Naive thymus-derived CD4-positive, alpha-beta T cell (primary cell): ENCODE measurements at regions of chr6 and their contacts with region 1.

Region 1: DNA sequence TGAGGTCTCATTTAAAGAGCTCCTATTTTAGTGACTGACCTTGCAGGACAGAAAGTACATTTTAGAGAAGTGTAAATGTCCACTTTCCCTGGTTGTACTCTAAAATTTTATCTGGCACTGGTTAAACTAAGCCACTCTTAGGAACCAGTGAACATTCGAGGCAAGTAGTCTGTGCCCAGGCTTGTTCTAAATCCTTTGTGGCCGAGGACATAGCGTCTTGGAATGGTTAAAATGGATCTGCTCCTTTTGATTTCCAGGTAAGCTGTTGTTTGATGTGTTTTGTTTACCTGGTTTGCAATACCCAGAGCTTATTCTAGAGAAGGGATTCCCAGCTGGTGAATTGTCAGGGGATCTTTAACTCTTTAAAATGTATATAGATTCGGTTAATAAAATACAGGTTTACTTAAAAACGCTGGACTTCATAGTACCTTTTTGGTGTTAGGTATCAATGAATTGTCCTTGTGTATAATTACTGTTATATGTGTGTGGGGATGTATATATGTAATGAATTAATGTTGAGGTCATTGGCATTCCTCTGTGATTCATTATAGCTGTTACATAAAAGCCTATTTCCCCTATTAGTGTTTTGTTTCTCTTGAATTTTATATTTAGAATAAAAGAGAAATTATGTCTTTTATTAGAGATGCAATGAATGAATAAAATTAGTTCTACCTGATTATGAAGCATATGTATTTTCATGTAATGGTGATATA is 15.8 kb downstream of the SNX9 start:
- DNase-seq: no peak
- ATAC-seq: no peak
- H3K4me3 ChIP-seq: no peak overlapping the region
- H3K4me3 Mint-ChIP-seq: peak overlapping the region in 1 of 10 donors; percentile 12
- H3K27ac ChIP-seq: no peak overlapping the region
- H3K27ac Mint-ChIP-seq: no peak overlapping the region
- H3K4me1 ChIP-seq: peaks cover 0 to 21% of the 10 kb centered on the region in 2 donors
- H3K4me1 Mint-ChIP-seq: peaks cover 21 to 96% (median 87%) of the 10 kb centered on the region in 7 donors
- H3K27me3 ChIP-seq: no peaks in the 10 kb centered on the region
- H3K27me3 Mint-ChIP-seq: peaks cover 0 to 3% (median 0%) of the 10 kb centered on the region in 5 donors

Region 2: GRCh38 chr6:157610451-157610999 is 228.3 kb before region 1 on chr6:
- CTCF ChIA-PET with region 1: no interaction called
- POLR2A ChIA-PET with region 1: no interaction called
- intact Hi-C with region 1: no loop called
- DNase-seq: no peak
- ATAC-seq: no peak
- H3K4me3 ChIP-seq: no peak overlapping the region
- H3K4me3 Mint-ChIP-seq: no peak overlapping the region
- H3K27ac ChIP-seq: no peak overlapping the region
- H3K27ac Mint-ChIP-seq: no peak overlapping the region
- H3K4me1 ChIP-seq: no peaks in the 10 kb centered on the region
- H3K4me1 Mint-ChIP-seq: peaks cover 0 to 12% (median 0%) of the 10 kb centered on the region in 7 donors
- H3K27me3 ChIP-seq: no peaks in the 10 kb centered on the region
- H3K27me3 Mint-ChIP-seq: no peaks in the 10 kb centered on the region

Region 3: GRCh38 chr6:157620566-157621343 is 218.1 kb before region 1 on chr6:
- CTCF ChIA-PET with region 1: no interaction called
- POLR2A ChIA-PET with region 1: no interaction called
- intact Hi-C with region 1: no loop called
- DNase-seq: no peak
- ATAC-seq: no peak
- H3K4me3 ChIP-seq: no peak overlapping the region
- H3K4me3 Mint-ChIP-seq: no peak overlapping the region
- H3K27ac ChIP-seq: no peak overlapping the region
- H3K27ac Mint-ChIP-seq: no peak overlapping the region
- H3K4me1 ChIP-seq: no peaks in the 10 kb centered on the region
- H3K4me1 Mint-ChIP-seq: peaks cover 0 to under 1% (median 0%) of the 10 kb centered on the region in 7 donors
- H3K27me3 ChIP-seq: no peaks in the 10 kb centered on the region
- H3K27me3 Mint-ChIP-seq: no peaks in the 10 kb centered on the region

Region 4: DNA sequence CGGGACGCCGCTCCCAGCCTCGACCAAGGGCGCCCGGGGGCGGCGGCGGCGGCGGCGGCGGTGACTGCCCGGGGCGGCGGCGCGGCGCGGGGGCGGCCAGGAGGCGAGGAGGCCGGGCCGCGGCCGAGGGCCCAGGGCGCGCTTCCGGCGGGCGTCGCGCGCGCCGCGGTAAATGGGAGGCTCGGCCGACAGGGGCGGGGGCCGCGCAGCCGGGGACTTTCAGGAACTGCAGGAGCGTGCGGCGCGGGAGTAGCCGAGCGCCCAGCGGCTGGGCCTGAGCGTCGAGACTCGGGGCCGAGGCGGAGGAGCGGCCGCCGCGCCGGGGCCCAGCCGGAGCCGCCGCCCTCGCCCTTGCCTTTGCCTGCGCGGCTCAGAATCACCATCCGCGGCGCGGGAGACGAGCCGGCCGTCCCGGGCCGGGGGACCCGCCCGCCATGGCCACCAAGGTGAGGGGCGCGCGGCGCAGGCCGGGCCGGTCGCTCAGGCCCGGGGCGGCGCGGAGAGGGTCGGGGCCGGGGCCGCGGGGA is 15.8 kb before region 1 on chr6 and contains the start of gene SNX9:
- CTCF ChIA-PET with region 1: interaction called, 3 read pairs
- POLR2A ChIA-PET with region 1: interaction called, 4 read pairs
- intact Hi-C with region 1: loop called in 1 of 2 experiments (anchors 2 kb)
- DNase-seq: peak in 8 of 9 donors; percentile 27 to 74 (median 56)
- ATAC-seq: peak; percentile 77
- H3K4me3 ChIP-seq: peak within 1 kb of the TSS; percentile 60
- H3K4me3 Mint-ChIP-seq: peak within 1 kb of the TSS; percentile 88 to 100 (median 96)
- H3K27ac ChIP-seq: peak within 1 kb of the TSS; percentile 96
- H3K27ac Mint-ChIP-seq: peak within 1 kb of the TSS; percentile 95 to 100 (median 99)
- H3K4me1 ChIP-seq: peaks cover 9 to 16% of the 10 kb centered on the region in 2 donors
- H3K4me1 Mint-ChIP-seq: peaks cover 15 to 70% (median 57%) of the 10 kb centered on the region in 7 donors
- H3K27me3 ChIP-seq: no peaks in the 10 kb centered on the region
- H3K27me3 Mint-ChIP-seq: peaks cover 0 to 42% (median 0%) of the 10 kb centered on the region in 5 donors
- total RNA-seq, gene SNX9: 13.4 to 39.2 (median 36.4) TPM

Region 5: DNA sequence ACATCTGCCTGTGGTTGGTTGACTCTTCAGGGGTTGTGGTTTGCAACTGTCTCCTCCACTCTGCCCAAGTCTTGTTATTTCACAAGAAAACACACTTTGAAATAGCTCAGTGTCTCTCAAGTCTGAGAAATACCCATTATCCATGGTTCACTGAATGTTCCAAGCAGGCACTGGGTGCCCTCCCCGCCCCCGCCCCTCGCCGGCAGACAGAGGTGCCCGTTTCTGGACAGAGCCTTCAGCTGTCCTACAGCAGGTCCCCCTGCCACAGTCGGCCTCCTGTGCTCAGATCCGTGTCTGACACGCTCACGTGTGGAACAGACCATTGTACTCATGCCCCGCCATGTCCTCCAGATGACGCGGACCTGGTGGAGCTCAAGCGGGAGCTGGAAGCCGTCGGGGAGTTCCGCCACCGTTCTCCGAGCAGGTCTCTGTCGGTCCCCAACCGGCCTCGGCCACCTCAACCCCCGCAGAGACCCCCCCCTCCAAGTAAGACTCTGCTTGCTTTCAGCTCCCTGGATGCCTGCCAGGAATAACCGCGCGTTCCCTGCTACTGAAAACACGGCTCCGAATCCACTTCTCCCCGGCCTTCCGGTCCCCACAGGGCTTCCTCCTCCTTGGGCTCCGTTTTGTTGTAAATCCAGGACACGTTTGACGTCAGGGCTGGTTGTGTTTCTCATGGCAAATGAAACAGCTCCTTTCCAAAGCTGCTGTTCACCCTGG is 247.8 kb after region 1 on chr6:
- CTCF ChIA-PET with region 1: no interaction called
- POLR2A ChIA-PET with region 1: no interaction called
- intact Hi-C with region 1: no loop called
- DNase-seq: peak in 1 of 9 donors; percentile 11
- ATAC-seq: peak; percentile 34
- H3K4me3 ChIP-seq: no peak overlapping the region
- H3K4me3 Mint-ChIP-seq: peak overlapping the region in 3 of 10 donors; percentile 17 to 50 (median 25)
- H3K27ac ChIP-seq: no peak overlapping the region
- H3K27ac Mint-ChIP-seq: peak overlapping the region in 1 of 9 donors; percentile 62
- H3K4me1 ChIP-seq: no peaks in the 10 kb centered on the region
- H3K4me1 Mint-ChIP-seq: peaks cover 0 to 18% (median 0%) of the 10 kb centered on the region in 7 donors
- H3K27me3 ChIP-seq: no peaks in the 10 kb centered on the region
- H3K27me3 Mint-ChIP-seq: no peaks in the 10 kb centered on the region